PC-3 (cell line): ENCODE measurements at regions of chr2 and their contacts with region 1.

Region 1: GRCh38 chr2:56239437-56239836 is 55.6 kb downstream of the CCDC85A start:
- DNase-seq: peak; percentile 93
- ATAC-seq: peak; percentile 92
- H3K4me3 ChIP-seq: no peak overlapping the region
- H3K27ac ChIP-seq: peak overlapping the region; percentile 56
- H3K4me1 ChIP-seq: peaks cover 13% of the 10 kb centered on the region
- H3K27me3 ChIP-seq: no peaks in the 10 kb centered on the region
- CTCF ChIP-seq: no peak

Region 2: GRCh38 chr2:56288838-56289580 is 49.6 kb after region 1 on chr2:
- CTCF ChIA-PET with region 1: no interaction called
- POLR2A ChIA-PET with region 1: no interaction called
- intact Hi-C with region 1: loop called (anchors 5 kb)
- DNase-seq: peak; percentile 25
- ATAC-seq: no peak
- H3K4me3 ChIP-seq: no peak overlapping the region
- H3K27ac ChIP-seq: no peak overlapping the region
- H3K4me1 ChIP-seq: peaks cover 24% of the 10 kb centered on the region
- H3K27me3 ChIP-seq: no peaks in the 10 kb centered on the region
- CTCF ChIP-seq: 0 out of 2 replicates have a peak, but pooled peaks have one; percentile 31

Region 3: DNA sequence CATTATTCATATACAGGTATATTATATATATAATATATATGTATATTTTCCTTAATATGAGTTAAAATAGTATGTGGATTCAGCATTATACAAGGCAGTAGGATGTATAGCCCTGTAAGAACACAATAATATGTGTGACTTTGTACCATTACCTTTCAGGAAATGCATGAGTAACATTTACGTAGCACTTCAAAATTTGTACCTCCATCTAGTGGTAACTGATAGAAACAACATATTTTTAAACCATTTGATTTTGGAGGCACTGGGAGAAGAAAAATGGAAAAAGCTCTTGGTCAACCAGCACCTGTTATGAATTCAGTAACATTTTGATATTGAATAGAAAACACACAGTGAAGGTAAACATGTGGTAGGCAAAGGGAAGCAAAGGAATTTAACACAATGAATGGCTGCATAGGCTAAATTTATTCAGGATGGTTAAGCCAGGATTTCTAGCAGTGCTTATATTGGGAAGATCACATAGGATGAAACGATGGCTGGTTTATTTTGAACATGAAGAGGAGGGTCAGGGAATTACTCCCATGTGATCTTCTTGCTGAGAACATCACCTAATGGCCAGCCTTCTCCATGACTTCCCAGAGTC is 509.8 kb after region 1 on chr2:
- CTCF ChIA-PET with region 1: no interaction called
- POLR2A ChIA-PET with region 1: no interaction called
- intact Hi-C with region 1: loop called (anchors 2 kb)
- DNase-seq: peak; percentile 68
- ATAC-seq: peak; percentile 15; the same call in 1 of the 2 replicates
- H3K4me3 ChIP-seq: no peak overlapping the region
- H3K27ac ChIP-seq: no peak overlapping the region
- H3K4me1 ChIP-seq: no peaks in the 10 kb centered on the region
- H3K27me3 ChIP-seq: peaks cover 16% of the 10 kb centered on the region
- CTCF ChIP-seq: peak; percentile 68